Aorta (tissue), 5 donors: ENCODE measurements at regions of chr17 and their contacts with region 1.

Region 1: GRCh38 chr17:48878918-48879898 is 13.4 kb upstream of the ATP5MC1 start:
- DNase-seq: peak in 1 of 2 donors; percentile 54
- ATAC-seq: peak; percentile 85
- H3K4me3 ChIP-seq: no peak overlapping the region
- H3K27ac ChIP-seq: no peak overlapping the region
- H3K4me1 ChIP-seq: no peaks in the 10 kb centered on the region
- H3K27me3 ChIP-seq: no peaks in the 10 kb centered on the region

Region 2: DNA sequence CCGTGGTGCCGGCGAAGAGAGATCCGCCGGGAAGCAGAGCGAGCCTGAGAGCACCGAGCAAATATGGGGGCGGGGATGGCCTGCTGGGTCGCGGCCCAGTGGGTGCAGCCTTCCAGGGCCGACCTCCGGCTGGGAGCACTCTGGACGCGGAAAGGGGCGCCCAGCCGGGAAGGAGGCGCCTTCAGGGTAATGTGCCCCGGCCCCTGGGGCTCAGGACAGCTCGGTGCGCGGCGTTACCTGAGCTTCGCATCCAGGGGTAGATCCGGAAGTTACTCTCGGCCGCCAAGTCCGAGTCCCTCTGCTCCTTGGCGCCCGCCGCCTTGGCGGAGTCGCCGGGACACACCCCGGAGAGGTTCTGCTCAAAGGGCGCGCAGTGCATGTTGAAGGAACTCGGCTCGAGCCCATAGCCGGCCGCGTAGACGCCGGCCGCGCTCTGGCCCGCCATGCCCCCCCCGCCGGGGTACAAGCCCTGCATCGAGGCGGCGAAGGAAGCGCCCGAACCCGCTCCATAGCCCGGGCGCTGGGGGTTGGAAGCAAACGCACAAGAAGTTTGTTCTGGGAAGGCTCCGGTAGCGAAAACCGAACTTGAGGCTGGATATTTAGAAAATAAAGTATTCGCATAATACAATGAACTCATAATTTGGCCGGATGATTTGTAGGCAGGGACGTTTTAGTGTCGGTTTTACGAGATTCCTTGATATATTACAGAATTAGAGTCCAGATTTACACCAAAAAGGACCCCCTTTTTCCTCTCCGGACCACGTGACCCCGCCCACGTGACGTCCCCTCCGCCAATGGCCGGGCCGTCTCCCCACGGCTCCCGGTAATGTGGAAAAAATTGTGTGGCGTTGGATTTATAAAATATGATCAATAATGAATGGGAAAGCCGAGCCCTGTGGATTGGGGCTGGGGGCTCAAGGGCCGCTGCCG is 268.7 kb before region 1 on chr17 and contains the start of gene HOXB7:
- intact Hi-C with region 1: no loop called
- DNase-seq: peak; percentile 92 to 94
- ATAC-seq: peak; percentile 79
- H3K4me3 ChIP-seq: peak within 1 kb of the TSS; percentile 54 to 70
- H3K27ac ChIP-seq: peak within 1 kb of the TSS; percentile 11 to 30
- H3K4me1 ChIP-seq: no peaks in the 10 kb centered on the region
- H3K27me3 ChIP-seq: no peaks in the 10 kb centered on the region
- total RNA-seq, gene HOXB7: 9.1 to 14.1 TPM

Region 3: DNA sequence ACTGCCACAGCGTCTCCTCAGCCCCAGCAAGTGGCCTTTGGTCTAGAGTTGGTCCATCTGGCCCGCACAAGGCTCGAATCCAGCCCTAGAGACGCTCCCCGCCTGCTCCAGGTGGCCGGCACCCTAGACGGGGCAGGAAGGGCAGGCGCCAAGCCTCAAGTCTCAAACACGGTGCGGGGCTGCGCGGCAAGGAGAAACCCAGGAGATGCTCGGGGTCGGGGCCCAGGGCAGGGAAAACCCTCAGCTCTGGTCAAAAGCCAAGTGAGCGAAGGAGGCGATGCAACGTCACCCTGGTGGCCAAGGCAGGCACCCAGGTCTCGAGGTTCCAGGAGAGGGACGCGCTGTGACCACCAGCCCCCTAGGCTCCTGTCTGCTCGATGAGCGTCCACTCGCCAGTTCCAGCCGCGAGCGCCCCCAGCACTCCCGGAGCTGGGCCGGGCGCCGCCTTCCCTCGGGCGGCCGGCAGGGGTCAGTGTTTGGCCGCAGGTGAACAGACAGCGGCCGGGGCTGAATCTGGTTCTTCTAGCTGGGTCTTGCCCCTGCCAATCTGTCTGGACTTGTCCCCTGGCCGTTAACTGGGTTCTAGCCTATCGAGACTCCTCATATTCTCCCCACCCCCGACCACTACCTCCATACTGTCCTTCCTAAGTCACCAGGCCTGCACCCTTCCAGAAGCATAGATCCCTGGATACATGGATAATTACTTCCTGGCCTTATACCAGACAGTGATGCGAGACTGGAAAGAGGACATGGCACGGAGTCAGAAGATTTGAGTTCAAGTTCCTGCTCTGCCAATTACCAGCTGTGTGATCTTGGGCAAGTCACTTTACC is 200.9 kb before region 1 on chr17:
- intact Hi-C with region 1: loop called (anchors 2 kb)
- DNase-seq: peak; percentile 63 to 88
- ATAC-seq: peak; percentile 86
- H3K4me3 ChIP-seq: no peak overlapping the region
- H3K27ac ChIP-seq: no peak overlapping the region
- H3K4me1 ChIP-seq: no peaks in the 10 kb centered on the region
- H3K27me3 ChIP-seq: no peaks in the 10 kb centered on the region

Region 4: DNA sequence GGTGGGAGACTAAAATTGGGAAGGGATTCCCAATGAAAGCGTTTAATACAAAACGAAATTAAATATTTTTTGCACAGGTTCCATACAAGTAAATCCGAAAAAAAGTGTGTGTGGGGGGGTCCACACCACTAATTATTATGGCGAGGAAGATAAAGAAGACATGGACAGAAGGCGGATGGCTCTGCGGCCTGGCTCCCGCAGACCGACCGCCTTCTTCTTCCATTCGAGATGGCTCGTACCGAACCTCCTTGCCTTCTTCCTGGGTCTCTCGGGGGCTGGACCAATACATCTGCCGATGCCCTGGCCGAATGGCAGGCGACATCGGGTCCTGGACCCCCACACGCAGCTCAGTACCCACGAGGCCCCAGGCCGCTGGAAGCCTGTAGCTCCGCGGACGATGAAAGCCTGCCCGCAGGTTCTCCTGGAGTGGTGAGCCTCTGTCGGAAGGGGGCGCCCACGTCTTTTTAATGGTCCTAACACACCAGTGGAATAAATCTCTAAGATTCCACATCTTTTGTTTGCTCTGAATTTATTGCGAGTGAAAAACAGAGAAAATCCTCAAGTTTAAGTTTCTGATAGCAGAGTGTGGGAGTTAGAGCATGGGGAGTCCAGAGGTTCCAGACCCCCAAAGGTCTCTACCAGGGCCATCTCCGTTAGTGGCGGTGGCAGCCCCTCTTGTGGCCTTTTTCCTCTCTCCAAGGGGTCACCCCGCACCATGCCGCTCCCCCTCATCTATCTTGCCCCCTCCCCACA is 154.8 kb before region 1 on chr17:
- intact Hi-C with region 1: loop called in 1 of 2 experiments (anchors 10 kb)
- DNase-seq: peak; percentile 91 to 95
- ATAC-seq: peak; percentile 73
- H3K4me3 ChIP-seq: no peak overlapping the region
- H3K27ac ChIP-seq: no peak overlapping the region
- H3K4me1 ChIP-seq: no peaks in the 10 kb centered on the region
- H3K27me3 ChIP-seq: no peaks in the 10 kb centered on the region

Region 5: DNA sequence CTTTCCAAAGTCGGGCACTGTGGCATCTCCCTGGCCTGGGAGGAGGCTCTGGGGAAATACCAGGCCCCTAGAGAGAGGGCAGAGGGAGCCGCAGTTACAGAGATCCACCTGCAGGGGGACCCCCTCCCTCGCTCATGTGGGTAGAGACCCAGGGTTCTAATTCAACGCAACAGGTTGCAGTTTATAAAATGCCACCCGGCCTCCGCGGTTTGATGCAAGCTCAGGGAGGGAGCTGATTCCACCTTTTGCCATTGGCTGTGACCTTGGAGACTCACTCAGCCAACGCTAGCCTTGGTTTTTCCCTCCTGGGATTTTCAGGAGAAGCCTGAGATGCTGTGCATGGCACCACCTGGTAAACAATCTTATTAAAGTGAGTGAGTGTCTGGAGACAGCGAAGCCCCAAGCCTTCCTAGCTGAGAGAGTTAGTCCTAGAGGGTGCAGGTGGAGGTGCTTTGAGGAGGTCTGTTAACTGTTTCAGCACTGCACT is 74.2 kb before region 1 on chr17:
- intact Hi-C with region 1: loop called in 1 of 2 experiments (anchors 2 kb)
- DNase-seq: peak; percentile 56 to 85
- ATAC-seq: no peak
- H3K4me3 ChIP-seq: no peak overlapping the region
- H3K27ac ChIP-seq: no peak overlapping the region
- H3K4me1 ChIP-seq: no peaks in the 10 kb centered on the region
- H3K27me3 ChIP-seq: peaks cover 0 to 2% of the 10 kb centered on the region in 2 donors

Region 6: GRCh38 chr17:48816774-48817590 is 62.2 kb before region 1 on chr17 and contains the start of gene TTLL6:
- intact Hi-C with region 1: loop called (anchors 1 to 5 kb)
- DNase-seq: peak; percentile 82 to 92
- ATAC-seq: peak; percentile 91
- H3K4me3 ChIP-seq: peak within 1 kb of the TSS in 1 of 2 donors; percentile 1
- H3K27ac ChIP-seq: no peak within 1 kb of the TSS
- H3K4me1 ChIP-seq: no peaks in the 10 kb centered on the region
- H3K27me3 ChIP-seq: no peaks in the 10 kb centered on the region
- total RNA-seq, gene TTLL6: 0.21 TPM in 1 of 2 donors, not detected in the other